ENCODE measurements at regions of chr10 and their contacts with region 1.

Region 1: DNA sequence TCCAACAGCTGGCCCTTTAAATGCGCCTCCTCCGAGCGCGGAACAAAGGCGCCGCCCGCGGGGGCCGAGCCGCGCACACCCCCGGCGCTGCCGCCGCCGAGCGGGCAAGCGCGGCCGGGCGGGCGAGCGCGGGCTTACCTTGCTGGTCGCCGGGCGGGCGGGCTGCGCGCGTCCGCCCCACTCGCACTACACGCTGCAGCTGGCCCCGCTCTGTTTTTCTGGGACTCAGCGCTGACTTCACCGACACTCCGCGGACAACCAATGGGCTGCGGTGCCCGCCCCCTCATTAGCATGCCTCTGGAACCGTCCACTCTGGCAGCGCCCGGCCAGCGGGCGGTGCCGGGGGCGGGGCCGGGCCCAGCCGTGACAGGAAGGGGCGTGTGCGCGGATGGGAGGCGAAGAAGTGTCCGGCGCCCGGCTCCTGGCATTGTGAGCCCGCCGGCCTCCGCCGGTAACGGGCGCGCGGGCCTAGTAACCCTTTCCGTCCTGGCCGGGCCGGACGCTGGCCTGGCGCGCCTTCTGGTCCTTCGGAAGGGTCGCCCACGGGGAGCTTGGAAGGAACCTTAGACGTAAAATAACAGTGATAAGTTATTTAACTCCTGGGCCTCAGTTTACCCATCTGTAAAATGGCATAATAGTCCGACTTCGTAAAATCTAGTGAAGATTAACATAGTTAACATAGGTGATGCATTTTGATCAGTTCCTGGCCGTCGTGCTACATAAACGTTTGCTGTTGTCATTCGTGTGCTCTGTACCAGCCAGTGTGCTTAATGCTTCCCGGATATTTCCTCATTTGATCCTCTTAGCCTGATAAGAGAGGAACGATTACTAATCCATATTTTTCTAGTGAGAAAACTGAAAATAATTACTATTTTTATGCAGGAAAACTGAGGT is at the start of gene SORBS1:
- DNase-seq: peak; percentile 97
- ATAC-seq: peak; percentile 99
- total RNA-seq, gene SORBS1: 465 to 617 TPM

Region 2: DNA sequence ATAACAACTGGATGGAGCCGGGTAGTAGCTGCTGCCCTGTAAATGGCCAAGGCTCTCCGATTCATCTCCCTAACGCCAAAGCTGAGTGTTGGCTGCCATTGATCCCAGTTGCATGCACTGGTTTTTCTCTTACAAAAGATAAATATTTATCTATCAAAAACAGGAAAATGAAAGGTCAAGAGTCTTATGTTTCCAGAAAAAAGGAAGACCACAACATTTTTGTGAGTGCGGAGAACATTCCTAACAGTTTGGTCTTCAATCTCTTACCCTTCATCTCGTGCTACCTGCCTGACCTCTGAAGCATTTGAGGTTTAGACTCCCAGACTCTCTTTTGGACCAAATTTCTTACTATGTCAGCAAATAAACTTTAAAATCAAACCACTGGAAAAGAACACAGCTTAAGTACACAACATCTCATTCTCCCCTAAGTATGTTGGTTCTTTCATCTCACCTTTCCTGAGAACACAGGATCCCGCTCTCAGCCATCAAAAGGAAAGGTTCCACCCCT is 61.9 kb before region 1 on chr10:
- intact Hi-C with region 1: loop called in 1 of 2 experiments (anchors 10 kb)
- DNase-seq: no peak
- ATAC-seq: no peak

Region 3: DNA sequence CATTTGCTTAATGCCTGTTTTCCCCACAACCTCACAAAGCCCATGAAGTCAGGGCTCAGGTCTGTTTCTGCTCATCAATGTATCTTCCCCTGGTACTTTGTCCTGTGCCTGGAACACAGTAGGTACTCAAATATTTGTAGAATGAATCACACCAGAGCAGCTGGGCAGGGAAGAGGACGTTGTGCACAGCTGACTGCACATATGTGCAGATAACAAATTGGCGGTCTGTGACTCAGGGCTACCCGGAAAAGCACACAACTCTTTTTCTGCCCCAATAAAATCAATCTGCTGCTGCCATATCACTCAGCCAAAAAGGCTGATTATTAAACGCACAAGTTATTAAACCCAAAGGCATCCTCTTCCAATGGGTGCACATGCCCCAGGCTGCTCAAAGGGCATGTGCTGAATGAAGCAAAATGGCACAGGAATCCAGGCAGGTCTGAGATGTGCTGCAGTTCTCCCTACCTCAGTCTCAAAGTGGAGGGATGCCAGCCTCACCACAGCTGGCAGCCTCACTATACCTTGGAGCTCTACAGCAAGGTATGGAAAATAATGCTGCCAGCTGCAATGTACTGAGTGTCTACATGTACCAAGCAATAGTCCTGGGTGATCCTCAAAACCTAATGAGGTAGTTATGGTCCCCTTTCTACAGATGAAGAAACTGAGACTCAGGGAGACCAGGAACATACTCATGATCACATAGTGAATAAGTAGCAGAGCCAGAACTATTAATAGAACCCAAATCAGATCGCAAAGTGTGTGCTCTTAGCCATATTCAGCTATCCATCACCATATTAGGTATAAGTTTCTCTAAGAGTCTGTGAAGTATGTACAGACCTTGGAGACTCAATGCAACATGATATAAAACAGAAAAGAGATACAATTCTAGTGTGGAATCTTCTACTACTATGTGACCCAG is 43.6 kb before region 1 on chr10:
- intact Hi-C with region 1: loop called in 1 of 2 experiments (anchors 5 kb)
- DNase-seq: peak; percentile 37
- ATAC-seq: peak in 1 of 2 donors; percentile 70